Naive thymus-derived CD4-positive, alpha-beta T cell (primary cell): ENCODE measurements at regions of chr22 and their contacts with region 1.

Region 1: GRCh38 chr22:50582562-50583293 is at the start of gene CHKB:
- DNase-seq: peak; percentile 95 to 99 (median 99)
- ATAC-seq: peak; percentile 97
- H3K4me3 ChIP-seq: peak within 1 kb of the TSS; percentile 80
- H3K4me3 Mint-ChIP-seq: peak within 1 kb of the TSS; percentile 84 to 97 (median 92)
- H3K27ac ChIP-seq: peak within 1 kb of the TSS; percentile 99
- H3K27ac Mint-ChIP-seq: peak within 1 kb of the TSS; percentile 84 to 96 (median 96)
- H3K4me1 ChIP-seq: peaks cover 16 to 18% of the 10 kb centered on the region in 2 donors
- H3K4me1 Mint-ChIP-seq: peaks cover under 1 to 35% (median 18%) of the 10 kb centered on the region in 7 donors
- H3K27me3 ChIP-seq: no peaks in the 10 kb centered on the region
- H3K27me3 Mint-ChIP-seq: no peaks in the 10 kb centered on the region
- total RNA-seq, gene CHKB: 121 to 214 (median 191) TPM

Region 2: GRCh38 chr22:50276143-50276542 is 306.6 kb before region 1 on chr22:
- CTCF ChIA-PET with region 1: no interaction called
- POLR2A ChIA-PET with region 1: no interaction called
- intact Hi-C with region 1: loop called in 1 of 2 experiments (anchors 10 kb)
- DNase-seq: peak in 2 of 9 donors; percentile 22 to 27
- ATAC-seq: peak; percentile 86
- H3K4me3 ChIP-seq: no peak overlapping the region
- H3K4me3 Mint-ChIP-seq: no peak overlapping the region
- H3K27ac ChIP-seq: no peak overlapping the region
- H3K27ac Mint-ChIP-seq: no peak overlapping the region
- H3K4me1 ChIP-seq: peaks cover 3 to 4% of the 10 kb centered on the region in 2 donors
- H3K4me1 Mint-ChIP-seq: peaks cover 0 to 12% (median 5%) of the 10 kb centered on the region in 7 donors
- H3K27me3 ChIP-seq: no peaks in the 10 kb centered on the region
- H3K27me3 Mint-ChIP-seq: peaks cover 0 to 12% (median 0%) of the 10 kb centered on the region in 5 donors

Region 3: DNA sequence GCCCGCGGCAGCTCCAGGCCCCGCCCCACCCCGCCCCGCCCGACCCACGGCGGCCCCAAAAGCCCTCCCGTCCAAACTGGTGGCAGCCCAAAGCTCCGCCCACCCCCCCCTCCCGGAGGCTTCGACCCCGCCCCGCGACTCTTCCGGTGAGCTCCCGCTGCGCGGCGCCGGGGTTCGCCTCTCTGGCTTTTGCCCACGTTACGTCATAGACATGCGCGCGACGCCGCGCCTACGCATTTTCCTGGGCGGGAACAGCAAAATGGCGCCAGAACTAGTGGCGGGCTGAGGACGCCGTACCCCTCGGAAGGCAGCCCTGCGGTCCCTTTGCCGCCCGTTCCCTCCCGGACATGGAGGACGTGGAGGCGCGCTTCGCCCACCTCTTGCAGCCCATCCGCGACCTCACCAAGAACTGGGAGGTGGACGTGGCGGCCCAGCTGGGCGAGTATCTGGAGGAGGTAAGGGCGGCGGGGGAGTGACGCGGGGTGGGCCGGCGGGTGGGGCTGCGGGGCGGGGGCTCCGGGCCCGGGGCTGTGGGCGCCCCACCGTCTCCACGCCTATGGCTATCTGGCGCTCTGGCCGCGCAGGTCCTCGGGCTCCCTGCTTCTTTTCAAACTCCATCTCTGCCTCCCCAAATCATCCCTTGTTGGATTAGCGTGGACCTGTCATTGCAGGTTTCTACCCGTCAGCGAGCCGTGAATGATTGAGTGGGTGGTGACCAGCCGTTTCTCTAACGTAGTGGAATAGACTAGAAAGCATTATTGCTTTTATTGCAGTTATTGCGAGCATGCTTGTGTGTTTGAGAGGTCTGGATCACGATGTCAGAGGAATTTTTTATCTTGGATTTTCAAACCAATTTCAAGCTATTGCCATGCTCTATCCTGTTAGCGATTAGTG is 74.5 kb before region 1 on chr22 and contains the start of gene NCAPH2:
- CTCF ChIA-PET with region 1: no interaction called
- POLR2A ChIA-PET with region 1: interaction called, 4 read pairs
- intact Hi-C with region 1: loop called (anchors 1 kb)
- DNase-seq: peak; percentile 95 to 99 (median 97)
- ATAC-seq: peak; percentile 86
- H3K4me3 ChIP-seq: peak within 1 kb of the TSS; percentile 91
- H3K4me3 Mint-ChIP-seq: peak within 1 kb of the TSS; percentile 88 to 97 (median 94)
- H3K27ac ChIP-seq: peak within 1 kb of the TSS; percentile 99
- H3K27ac Mint-ChIP-seq: peak within 1 kb of the TSS; percentile 89 to 99 (median 98)
- H3K4me1 ChIP-seq: peaks cover 19 to 26% of the 10 kb centered on the region in 2 donors
- H3K4me1 Mint-ChIP-seq: peaks cover 14 to 33% (median 27%) of the 10 kb centered on the region in 7 donors
- H3K27me3 ChIP-seq: no peaks in the 10 kb centered on the region
- H3K27me3 Mint-ChIP-seq: no peaks in the 10 kb centered on the region
- total RNA-seq, gene NCAPH2: 74.3 to 135 (median 91.1) TPM

Region 4: DNA sequence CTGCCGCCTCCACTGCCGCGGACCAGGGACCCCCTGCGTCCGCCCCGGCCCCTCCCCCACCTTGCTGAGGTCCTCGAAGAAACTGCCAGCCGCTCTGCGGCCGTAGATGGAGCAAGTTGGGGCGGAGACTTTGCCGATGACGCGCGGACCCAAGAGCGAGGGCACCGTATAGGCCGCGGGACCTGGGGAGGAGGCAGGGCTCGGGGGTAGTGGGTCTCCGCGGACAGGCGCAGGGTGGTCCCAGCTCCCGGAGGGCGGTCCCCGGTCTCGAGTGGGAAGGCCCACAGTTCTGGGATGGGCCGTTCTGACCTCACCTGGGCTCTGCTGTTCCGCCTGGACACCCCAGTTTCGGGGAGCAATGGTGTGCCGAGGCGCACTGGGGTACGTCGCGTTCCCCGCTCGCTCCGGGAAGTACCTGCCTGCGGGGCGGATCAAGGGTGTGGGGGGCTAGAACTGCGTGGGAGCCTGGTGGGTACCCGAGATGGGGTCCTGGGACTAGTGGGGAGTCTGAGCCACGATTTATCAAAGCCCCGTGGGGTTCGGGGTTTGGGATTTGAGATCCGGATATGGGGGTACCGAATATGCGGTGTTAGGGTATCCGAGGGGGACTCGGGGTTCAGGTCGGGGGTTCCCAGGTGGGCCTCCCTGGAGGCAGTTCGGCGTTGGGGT is 51.7 kb before region 1 on chr22:
- CTCF ChIA-PET with region 1: interaction called, 3 read pairs
- POLR2A ChIA-PET with region 1: interaction called, 28 read pairs
- intact Hi-C with region 1: loop called (anchors 1 kb)
- DNase-seq: peak in 7 of 9 donors; percentile 46 to 85 (median 57)
- ATAC-seq: peak; percentile 60
- H3K4me3 ChIP-seq: peak overlapping the region; percentile 86
- H3K4me3 Mint-ChIP-seq: peak overlapping the region; percentile 80 to 96 (median 87)
- H3K27ac ChIP-seq: peak overlapping the region; percentile 84
- H3K27ac Mint-ChIP-seq: peak overlapping the region; percentile 67 to 100 (median 90)
- H3K4me1 ChIP-seq: peaks cover 5 to 14% of the 10 kb centered on the region in 2 donors
- H3K4me1 Mint-ChIP-seq: peaks cover 0 to 49% (median 30%) of the 10 kb centered on the region in 7 donors
- H3K27me3 ChIP-seq: no peaks in the 10 kb centered on the region
- H3K27me3 Mint-ChIP-seq: peaks cover 0 to 5% (median 0%) of the 10 kb centered on the region in 5 donors

Region 5: DNA sequence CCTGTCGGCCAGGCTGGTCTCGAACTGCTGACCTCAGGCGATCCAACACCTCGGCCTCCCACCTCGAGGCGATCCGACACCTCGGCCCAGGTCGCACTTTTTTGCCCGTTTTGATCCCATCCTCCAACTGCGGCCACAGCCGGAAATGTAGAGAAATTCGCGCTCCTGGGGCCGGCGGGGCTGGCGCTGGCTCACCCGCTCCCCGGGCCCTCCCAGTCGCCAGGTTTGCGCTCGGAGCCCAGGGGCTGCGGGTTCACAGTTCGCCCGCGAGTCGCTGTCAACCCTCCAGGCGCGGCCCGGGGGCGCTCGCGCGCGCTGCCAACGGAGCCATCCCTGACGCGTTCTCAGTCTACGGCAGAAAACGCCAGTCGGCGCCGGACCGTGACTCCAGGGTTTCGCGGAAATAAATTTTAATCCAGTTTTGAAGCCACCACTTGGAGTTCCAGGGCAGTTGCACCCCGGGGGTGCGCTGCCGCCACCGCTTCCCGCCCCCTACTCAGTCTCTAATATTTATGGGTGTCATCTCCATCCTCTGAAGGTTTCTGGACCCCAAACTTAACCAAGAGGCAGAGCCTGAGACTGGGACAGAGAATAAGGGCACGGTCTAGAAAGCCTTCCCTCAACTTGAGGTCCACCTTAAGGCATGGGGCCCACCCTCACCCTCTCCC is 38.5 kb before region 1 on chr22:
- CTCF ChIA-PET with region 1: no interaction called
- POLR2A ChIA-PET with region 1: interaction called, 10 read pairs
- intact Hi-C with region 1: loop called (anchors 1 kb)
- DNase-seq: peak; percentile 60 to 80 (median 71)
- ATAC-seq: peak; percentile 63
- H3K4me3 ChIP-seq: peak overlapping the region; percentile 67
- H3K4me3 Mint-ChIP-seq: peak overlapping the region; percentile 53 to 77 (median 70)
- H3K27ac ChIP-seq: peak overlapping the region; percentile 45
- H3K27ac Mint-ChIP-seq: peak overlapping the region in 6 of 9 donors; percentile 49 to 93 (median 75)
- H3K4me1 ChIP-seq: peaks cover 33 to 40% of the 10 kb centered on the region in 2 donors
- H3K4me1 Mint-ChIP-seq: peaks cover 31 to 59% (median 36%) of the 10 kb centered on the region in 7 donors
- H3K27me3 ChIP-seq: no peaks in the 10 kb centered on the region
- H3K27me3 Mint-ChIP-seq: no peaks in the 10 kb centered on the region

Region 6: GRCh38 chr22:50599786-50600455 is 17.2 kb after region 1 on chr22:
- CTCF ChIA-PET with region 1: no interaction called
- POLR2A ChIA-PET with region 1: interaction called, 3 read pairs
- intact Hi-C with region 1: loop called in 1 of 2 experiments (anchors 1 kb)
- DNase-seq: peak; percentile 43 to 81 (median 66)
- ATAC-seq: peak; percentile 89
- H3K4me3 ChIP-seq: no peak overlapping the region
- H3K4me3 Mint-ChIP-seq: peak overlapping the region; percentile 19 to 79 (median 54)
- H3K27ac ChIP-seq: no peak overlapping the region
- H3K27ac Mint-ChIP-seq: no peak overlapping the region
- H3K4me1 ChIP-seq: peaks cover 0 to 4% of the 10 kb centered on the region in 2 donors
- H3K4me1 Mint-ChIP-seq: peaks cover 6 to 18% (median 12%) of the 10 kb centered on the region in 7 donors
- H3K27me3 ChIP-seq: peaks cover 5 to 6% of the 10 kb centered on the region in 2 donors
- H3K27me3 Mint-ChIP-seq: peaks cover 19 to 51% (median 28%) of the 10 kb centered on the region in 5 donors